IMR-90 (cell line): ENCODE measurements at regions of chr10 and their contacts with region 1.

Region 1: DNA sequence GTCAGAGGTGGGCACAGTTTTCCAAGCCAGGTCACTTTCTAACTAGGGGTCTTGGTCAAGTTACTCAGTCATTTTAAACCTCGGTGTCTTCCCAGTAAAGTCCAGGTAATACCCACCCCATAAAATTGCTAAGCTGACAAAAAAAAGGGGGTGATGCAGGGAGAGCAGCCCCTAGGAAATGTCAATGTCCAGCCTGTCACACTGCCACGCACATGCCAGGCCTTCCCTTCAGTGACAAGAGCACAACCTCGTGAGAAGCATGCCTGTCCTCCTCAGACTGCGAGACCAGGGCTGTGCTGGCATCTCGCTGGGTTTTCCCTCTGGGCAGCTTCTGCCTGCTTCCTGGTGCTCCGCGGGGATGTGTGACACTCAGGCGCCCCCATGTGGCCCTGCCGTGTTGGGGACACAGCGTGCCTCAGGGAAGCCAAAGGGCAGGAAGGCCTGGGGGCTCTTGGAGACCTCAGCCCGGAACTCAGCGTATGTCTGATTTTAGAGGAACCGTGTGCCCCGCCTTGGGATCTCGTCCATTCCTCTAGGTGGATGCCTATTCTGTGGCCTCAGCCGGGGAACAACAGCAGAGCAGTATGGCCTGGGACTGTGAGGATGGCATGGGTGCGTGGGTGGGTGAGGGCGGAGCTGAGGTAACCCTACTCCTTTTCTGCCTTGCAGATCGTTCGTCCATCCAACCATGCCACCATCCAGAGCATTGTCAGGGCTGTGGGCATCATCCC is 10.2 kb upstream of the GDF2 start:
- DNase-seq: peak; percentile 67
- ATAC-seq: peak; percentile 98
- H3K4me3 ChIP-seq: no peak overlapping the region
- H3K27ac ChIP-seq: no peak overlapping the region
- H3K4me1 ChIP-seq: no peaks in the 10 kb centered on the region
- H3K27me3 ChIP-seq: peaks cover 14% of the 10 kb centered on the region
- CTCF ChIP-seq: peak; percentile 94
- POLR2A ChIP-seq: peak; percentile 44; the same call in 1 of the 2 replicates
- RAD21 ChIP-seq: peak; percentile 99

Region 2: GRCh38 chr10:46992803-46993561 is 319.1 kb before region 1 on chr10:
- CTCF ChIA-PET with region 1: interaction called, 14 read pairs
- POLR2A ChIA-PET with region 1: no interaction called
- dilution Hi-C with region 1: no loop called
- in situ Hi-C with region 1: no loop called
- intact Hi-C with region 1: loop called (anchors 10 kb)
- DNase-seq: peak; percentile 50
- ATAC-seq: peak; percentile 97
- H3K4me3 ChIP-seq: no peak overlapping the region
- H3K27ac ChIP-seq: no peak overlapping the region
- H3K4me1 ChIP-seq: peaks cover 3% of the 10 kb centered on the region; the same call in 1 of the 2 replicates
- H3K27me3 ChIP-seq: peaks cover 2% of the 10 kb centered on the region; the same call in 1 of the 2 replicates
- CTCF ChIP-seq: peak; percentile 54
- POLR2A ChIP-seq: no peak
- RAD21 ChIP-seq: peak; percentile 63

Region 3: DNA sequence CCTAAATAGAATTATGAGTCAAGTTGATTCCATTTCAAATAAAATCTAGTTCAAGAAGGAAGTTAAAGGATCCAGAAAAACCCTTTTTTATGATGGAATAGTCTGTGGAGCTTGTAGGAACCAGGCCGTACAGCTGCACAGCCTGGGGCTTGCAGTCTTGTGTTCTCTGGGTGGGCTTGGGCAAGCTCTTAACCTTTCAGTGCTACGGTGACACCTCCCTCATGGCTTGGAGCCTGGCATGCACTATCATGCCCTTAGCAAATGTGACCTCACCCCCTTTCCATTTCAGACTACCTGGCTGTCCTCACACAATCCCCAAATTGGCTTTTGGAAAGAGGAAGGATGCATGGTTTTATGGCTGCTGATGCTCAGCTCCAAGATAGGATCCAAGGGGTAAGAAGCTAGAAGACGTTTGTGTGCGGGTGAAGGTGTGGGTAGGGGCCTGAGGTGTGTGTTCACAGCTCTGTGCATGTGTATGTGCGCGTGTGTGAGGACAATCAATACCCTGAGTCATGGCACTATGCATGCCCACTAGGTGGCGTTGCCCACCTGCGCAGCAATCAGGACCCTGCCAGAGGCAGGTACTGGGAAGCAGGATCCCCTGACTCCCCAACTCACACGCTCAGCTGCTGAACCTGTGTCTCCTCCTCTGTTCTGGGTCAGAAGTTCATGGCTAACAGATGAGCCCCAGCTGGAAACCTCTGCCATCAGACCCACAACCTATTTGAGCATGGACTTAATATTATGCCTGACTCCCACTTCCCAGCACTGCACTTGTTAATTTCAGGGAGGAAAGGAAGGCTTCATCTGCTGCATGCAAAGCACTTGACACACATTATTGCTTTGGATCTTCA is 287.5 kb before region 1 on chr10:
- CTCF ChIA-PET with region 1: interaction called, 16 read pairs
- POLR2A ChIA-PET with region 1: no interaction called
- dilution Hi-C with region 1: no loop called
- in situ Hi-C with region 1: loop called (anchors 10 kb)
- intact Hi-C with region 1: loop called (anchors 1 kb)
- DNase-seq: peak; percentile 62
- ATAC-seq: peak; percentile 76
- H3K4me3 ChIP-seq: no peak overlapping the region
- H3K27ac ChIP-seq: no peak overlapping the region
- H3K4me1 ChIP-seq: peaks cover 5% of the 10 kb centered on the region; the same call in 1 of the 2 replicates
- H3K27me3 ChIP-seq: no peaks in the 10 kb centered on the region
- CTCF ChIP-seq: peak; percentile 78
- POLR2A ChIP-seq: no peak
- RAD21 ChIP-seq: peak; percentile 89

Region 4: GRCh38 chr10:47047671-47048525 is 264.2 kb before region 1 on chr10:
- CTCF ChIA-PET with region 1: interaction called, 36 read pairs
- POLR2A ChIA-PET with region 1: no interaction called
- dilution Hi-C with region 1: no loop called
- in situ Hi-C with region 1: no loop called
- intact Hi-C with region 1: loop called (anchors 1 kb)
- DNase-seq: peak; percentile 77
- ATAC-seq: peak; percentile 87
- H3K4me3 ChIP-seq: no peak overlapping the region
- H3K27ac ChIP-seq: peak overlapping the region; percentile 14; the same call in 1 of the 2 replicates
- H3K4me1 ChIP-seq: peaks cover 13% of the 10 kb centered on the region; the same call in 1 of the 2 replicates
- H3K27me3 ChIP-seq: no peaks in the 10 kb centered on the region
- CTCF ChIP-seq: peak; percentile 92
- POLR2A ChIP-seq: peak; percentile 48; the same call in 1 of the 2 replicates
- RAD21 ChIP-seq: peak; percentile 98

Region 5: DNA sequence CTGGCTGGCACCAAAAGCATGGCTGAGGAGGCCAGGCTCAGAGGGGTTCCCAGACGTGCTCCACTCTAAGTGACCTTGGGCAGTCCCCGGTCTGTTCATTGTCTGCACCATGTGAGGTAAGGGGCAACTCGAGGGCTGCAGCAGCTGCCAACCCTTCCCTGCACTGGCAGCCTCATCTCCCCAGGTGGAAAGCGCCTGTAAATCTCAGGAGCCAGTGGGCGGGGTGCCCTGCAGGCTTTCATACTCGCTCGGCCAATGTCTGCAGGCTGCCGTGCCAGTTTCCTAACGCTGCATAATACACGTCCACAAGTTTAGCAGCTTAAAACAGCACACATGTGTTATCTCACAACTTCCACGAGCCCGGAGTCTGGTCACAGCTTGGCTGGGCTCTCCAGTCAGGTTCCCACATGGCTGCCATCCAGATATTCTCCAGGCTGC is 24.7 kb before region 1 on chr10:
- CTCF ChIA-PET with region 1: no interaction called
- POLR2A ChIA-PET with region 1: no interaction called
- dilution Hi-C with region 1: no loop called
- in situ Hi-C with region 1: no loop called
- intact Hi-C with region 1: no loop called
- DNase-seq: no peak
- ATAC-seq: no peak
- H3K4me3 ChIP-seq: no peak overlapping the region
- H3K27ac ChIP-seq: no peak overlapping the region
- H3K4me1 ChIP-seq: no peaks in the 10 kb centered on the region
- H3K27me3 ChIP-seq: peaks cover 28% of the 10 kb centered on the region
- CTCF ChIP-seq: no peak
- POLR2A ChIP-seq: no peak
- RAD21 ChIP-seq: no peak